ENCODE measurements at regions of chr1 and their contacts with region 1.

Region 1: DNA sequence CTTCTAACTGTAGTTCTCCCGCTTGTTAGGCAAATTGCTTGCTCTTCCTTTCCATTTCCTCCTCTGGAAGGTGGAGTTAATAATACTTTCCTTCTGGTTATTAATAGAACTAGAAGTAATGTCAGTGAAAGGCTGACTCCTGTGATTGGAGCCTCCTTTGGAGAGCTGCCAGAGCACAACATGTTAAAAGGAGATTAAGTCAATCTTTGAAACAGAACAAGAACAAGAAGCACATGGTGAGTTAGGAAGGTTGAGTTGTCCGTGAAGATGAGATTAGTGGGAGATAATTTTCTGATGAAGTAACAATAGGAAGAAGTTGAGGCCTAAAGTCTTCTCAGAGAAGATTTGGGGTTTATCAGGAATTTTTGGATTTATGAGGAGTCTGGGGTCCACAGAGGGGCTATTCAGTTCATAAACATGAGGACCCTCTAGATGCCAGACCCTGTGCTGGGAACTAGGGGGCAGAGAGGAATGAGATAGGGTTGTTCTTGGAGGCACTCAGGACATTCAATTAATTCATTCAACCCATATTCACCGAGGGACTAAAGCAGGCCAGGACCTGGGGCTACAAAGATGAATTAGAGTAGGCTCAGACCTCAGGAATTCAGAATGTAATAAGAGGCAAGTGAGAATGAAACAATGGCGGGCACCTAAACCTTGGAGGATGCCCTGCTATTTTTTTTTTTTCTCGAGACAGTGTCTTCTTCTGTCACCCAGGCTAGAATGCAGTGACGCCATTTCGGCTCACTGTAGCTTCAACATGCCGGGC is 40.7 kb upstream of the DHCR24 start:
- DNase-seq: peak; percentile 66 to 69
- ATAC-seq: peak; percentile 66 to 73
- H3K4me3 ChIP-seq: no peak overlapping the region
- H3K27ac ChIP-seq: peak overlapping the region; percentile 71 to 92 (median 88)
- H3K4me1 ChIP-seq: peaks cover 56 to 67% of the 10 kb centered on the region in 2 donors
- H3K27me3 ChIP-seq: no peaks in the 10 kb centered on the region
- CTCF ChIP-seq: no peak
- POLR2A ChIP-seq: peak in 1 of 2 donors; percentile 16

Region 2: DNA sequence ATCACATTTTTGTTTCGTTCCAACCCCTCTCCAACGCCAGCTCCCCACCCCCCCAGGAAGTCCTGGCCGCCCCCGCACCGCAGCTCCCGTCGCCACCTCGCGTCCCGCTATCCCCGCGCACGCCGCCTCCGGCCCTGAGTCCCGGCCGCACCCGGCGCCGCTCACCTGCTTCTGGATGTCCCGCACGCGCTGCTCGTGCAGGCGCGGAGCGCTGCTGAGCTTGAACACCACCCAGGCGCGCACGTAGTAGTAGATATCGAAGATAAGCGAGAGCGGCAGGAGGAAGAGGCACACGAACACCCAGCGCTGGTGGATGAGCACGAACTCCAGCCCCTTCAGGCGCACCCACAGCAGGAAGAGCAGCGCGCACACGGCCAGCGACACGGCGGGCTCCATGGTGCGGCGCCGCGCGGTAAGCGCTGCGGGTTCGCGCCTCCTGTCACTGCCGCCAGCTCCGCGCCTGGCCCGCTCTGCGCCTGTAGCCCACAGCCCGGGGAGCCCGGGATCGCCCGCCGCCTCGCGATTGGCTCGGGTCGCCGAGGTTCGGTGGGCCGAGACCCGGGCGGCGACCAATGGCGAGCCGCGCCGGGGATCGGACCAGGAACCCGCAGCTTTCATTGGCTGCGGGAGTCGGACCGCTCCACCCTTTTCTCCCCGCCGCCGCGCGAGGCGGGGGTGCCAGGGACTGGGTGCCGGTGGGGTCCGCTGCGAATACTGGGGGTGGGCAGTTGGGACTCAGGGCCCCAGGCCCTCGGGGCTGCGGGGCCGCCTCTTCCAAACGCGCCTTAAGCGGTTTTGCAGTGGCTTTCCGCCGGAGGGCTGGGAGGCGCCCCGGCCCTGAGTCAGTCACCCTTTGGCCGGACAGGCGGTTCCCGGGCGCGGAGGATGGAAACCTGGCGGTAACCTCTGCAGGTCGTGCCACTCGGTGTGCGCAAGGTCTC is 40.7 kb before region 1 on chr1 and contains the start of gene DHCR24:
- in situ Hi-C with region 1: no loop called
- intact Hi-C with region 1: loop called (anchors 2 kb)
- DNase-seq: peak; percentile 82 to 83
- ATAC-seq: peak; percentile 62 to 75
- H3K4me3 ChIP-seq: peak within 1 kb of the TSS; percentile 81 to 99 (median 86)
- H3K27ac ChIP-seq: peak within 1 kb of the TSS; percentile 84 to 93 (median 88)
- H3K4me1 ChIP-seq: peaks cover 34 to 44% of the 10 kb centered on the region in 2 donors
- H3K27me3 ChIP-seq: no peaks in the 10 kb centered on the region
- CTCF ChIP-seq: no peak
- POLR2A ChIP-seq: peak; percentile 89 to 93
- total RNA-seq, gene DHCR24: 155 to 362 (median 207) TPM